WTC11 (cell line): ENCODE measurements at regions of chr19 and their contacts with region 1.

Region 1: GRCh38 chr19:41706741-41707501 is 1.5 kb upstream of the CEACAM5 start:
- DNase-seq: peak; percentile 88
- ATAC-seq: peak; percentile 96
- H3K4me3 Mint-ChIP-seq: peak overlapping the region; percentile 69
- H3K27ac Mint-ChIP-seq: no peak overlapping the region
- H3K4me1 Mint-ChIP-seq: 0 out of 2 replicates have a peak, but pooled peaks cover 2% of the 10 kb centered on the region
- H3K27me3 Mint-ChIP-seq: peaks cover 22% of the 10 kb centered on the region
- CTCF ChIP-seq: peak; percentile 96

Region 2: GRCh38 chr19:41439441-41440222 is 267.3 kb before region 1 on chr19 and contains the start of gene DMAC2:
- CTCF ChIA-PET with region 1: interaction called, 10 read pairs
- POLR2A ChIA-PET with region 1: no interaction called
- DNase-seq: peak; percentile 97
- ATAC-seq: peak; percentile 98
- H3K4me3 Mint-ChIP-seq: no peak within 1 kb of the TSS
- H3K27ac Mint-ChIP-seq: no peak within 1 kb of the TSS
- H3K4me1 Mint-ChIP-seq: peaks cover 13% of the 10 kb centered on the region
- H3K27me3 Mint-ChIP-seq: peaks cover 17% of the 10 kb centered on the region; the same call in 1 of the 2 replicates
- CTCF ChIP-seq: no peak
- total RNA-seq, gene DMAC2: 77.6 to 85.6 TPM (median 82.6 TPM) in 3 replicates

Region 3: DNA sequence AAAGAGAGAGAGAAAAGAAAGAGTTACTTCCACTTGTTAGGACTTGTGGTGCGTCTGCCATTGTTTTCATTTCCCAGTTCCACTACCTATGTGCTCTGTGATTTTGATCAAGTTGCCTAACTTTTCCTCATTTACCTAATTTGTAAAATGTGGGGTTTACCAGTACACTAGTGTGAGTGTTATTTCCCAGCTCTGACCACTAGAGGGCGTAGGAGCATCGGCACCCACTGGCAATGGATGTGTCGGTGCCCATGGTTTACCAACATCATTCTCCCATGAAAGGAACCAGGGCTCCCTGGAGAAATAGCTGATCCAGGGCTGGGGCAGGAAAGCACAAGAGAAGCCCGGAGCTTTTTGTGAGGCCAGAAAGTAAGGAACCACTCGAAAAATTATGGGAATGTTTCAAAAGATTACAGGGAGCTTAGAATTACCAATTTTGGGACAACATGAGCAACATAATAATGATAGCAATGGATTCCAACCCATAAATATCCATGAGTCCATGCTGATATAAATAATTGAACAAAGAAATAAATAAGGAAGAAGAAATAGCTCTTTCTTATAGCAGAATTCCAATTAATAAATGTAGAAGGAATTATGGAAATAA is 64.9 kb before region 1 on chr19:
- CTCF ChIA-PET with region 1: interaction called, 64 read pairs
- POLR2A ChIA-PET with region 1: no interaction called
- DNase-seq: peak; percentile 81
- ATAC-seq: peak; percentile 96
- H3K4me3 Mint-ChIP-seq: no peak overlapping the region
- H3K27ac Mint-ChIP-seq: no peak overlapping the region
- H3K4me1 Mint-ChIP-seq: no peaks in the 10 kb centered on the region
- H3K27me3 Mint-ChIP-seq: no peaks in the 10 kb centered on the region
- CTCF ChIP-seq: peak; percentile 92

Region 4: DNA sequence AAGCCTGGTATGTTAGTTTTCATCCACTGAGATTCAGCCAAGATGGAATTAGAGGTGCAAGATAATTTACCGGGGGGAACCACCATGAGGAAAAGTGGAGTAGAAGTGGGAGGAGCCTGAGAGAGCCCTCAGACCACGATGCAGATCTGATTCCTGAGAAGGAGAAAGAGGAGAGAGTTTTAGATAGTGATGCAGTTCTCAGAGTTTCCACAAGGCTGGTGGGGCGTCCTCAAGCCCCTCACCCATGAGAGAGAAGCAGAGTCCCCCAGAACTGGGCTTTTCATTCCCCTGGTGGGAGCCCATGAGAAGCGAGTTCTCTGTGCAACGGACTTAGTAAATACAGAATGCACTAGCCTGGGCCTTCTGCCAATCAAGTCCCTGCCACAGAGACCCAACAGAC is 19.6 kb after region 1 on chr19:
- CTCF ChIA-PET with region 1: interaction called, 73 read pairs
- POLR2A ChIA-PET with region 1: no interaction called
- DNase-seq: peak; percentile 33
- ATAC-seq: peak; percentile 99
- H3K4me3 Mint-ChIP-seq: no peak overlapping the region
- H3K27ac Mint-ChIP-seq: no peak overlapping the region
- H3K4me1 Mint-ChIP-seq: peaks cover 5% of the 10 kb centered on the region; the same call in 1 of the 2 replicates
- H3K27me3 Mint-ChIP-seq: peaks cover 4% of the 10 kb centered on the region; the same call in 1 of the 2 replicates
- CTCF ChIP-seq: no peak

Region 5: GRCh38 chr19:41746593-41747227 is 39.8 kb after region 1 on chr19:
- CTCF ChIA-PET with region 1: interaction called, 133 read pairs
- POLR2A ChIA-PET with region 1: no interaction called
- DNase-seq: peak; percentile 67
- ATAC-seq: peak; percentile 98
- H3K4me3 Mint-ChIP-seq: no peak overlapping the region
- H3K27ac Mint-ChIP-seq: no peak overlapping the region
- H3K4me1 Mint-ChIP-seq: no peaks in the 10 kb centered on the region
- H3K27me3 Mint-ChIP-seq: peaks cover 40% of the 10 kb centered on the region
- CTCF ChIP-seq: no peak

Region 6: DNA sequence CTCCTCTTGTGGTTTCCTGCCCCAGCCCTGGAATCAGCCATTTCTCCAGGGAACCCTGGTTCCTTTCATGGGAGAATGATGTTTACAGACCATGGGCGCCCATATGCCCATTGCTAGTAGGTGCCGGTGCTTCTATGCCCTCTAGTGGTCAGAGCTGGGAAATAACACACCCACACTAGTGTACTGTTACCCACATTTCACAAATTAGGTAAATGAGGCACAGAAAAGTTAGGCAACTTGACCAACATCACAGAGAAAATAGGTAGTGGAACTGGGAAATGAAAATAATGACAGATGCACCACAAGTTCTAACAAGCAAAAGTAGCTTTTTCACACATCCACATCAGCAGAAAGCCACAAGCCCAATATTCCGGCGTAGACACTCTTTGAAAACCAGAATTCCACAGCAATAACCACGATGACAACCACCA is 88.1 kb after region 1 on chr19:
- CTCF ChIA-PET with region 1: interaction called, 29 read pairs
- POLR2A ChIA-PET with region 1: no interaction called
- DNase-seq: peak; percentile 76
- ATAC-seq: peak; percentile 93
- H3K4me3 Mint-ChIP-seq: no peak overlapping the region
- H3K27ac Mint-ChIP-seq: no peak overlapping the region
- H3K4me1 Mint-ChIP-seq: peaks cover 4% of the 10 kb centered on the region
- H3K27me3 Mint-ChIP-seq: peaks cover 11% of the 10 kb centered on the region
- CTCF ChIP-seq: peak; percentile 86

Region 7: GRCh38 chr19:41837981-41838708 is 131.2 kb after region 1 on chr19:
- CTCF ChIA-PET with region 1: interaction called, 13 read pairs
- POLR2A ChIA-PET with region 1: no interaction called
- DNase-seq: no peak
- ATAC-seq: no peak
- H3K4me3 Mint-ChIP-seq: no peak overlapping the region
- H3K27ac Mint-ChIP-seq: no peak overlapping the region
- H3K4me1 Mint-ChIP-seq: no peaks in the 10 kb centered on the region
- H3K27me3 Mint-ChIP-seq: peaks cover 31% of the 10 kb centered on the region
- CTCF ChIP-seq: no peak

Region 8: DNA sequence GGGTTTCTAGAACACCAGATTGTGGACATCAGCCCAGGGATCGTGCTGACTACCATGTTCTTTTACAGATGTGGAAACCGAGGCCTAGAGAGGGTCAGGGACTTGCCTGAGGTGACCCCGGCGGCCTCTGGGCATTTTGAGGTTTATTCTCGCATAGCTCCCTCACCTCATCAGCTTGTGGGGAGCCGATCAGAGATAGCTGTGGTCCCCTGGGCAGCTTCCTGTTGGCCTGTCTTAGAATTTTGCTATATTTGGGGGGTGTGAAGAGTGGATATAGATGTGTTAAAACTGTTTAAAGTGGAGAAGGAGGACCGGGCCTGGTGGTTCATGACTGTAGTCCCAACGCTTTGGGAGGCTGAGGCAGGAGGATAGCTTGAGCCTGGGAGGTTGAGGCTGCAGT is 183.0 kb after region 1 on chr19:
- CTCF ChIA-PET with region 1: no interaction called
- POLR2A ChIA-PET with region 1: no interaction called
- DNase-seq: no peak
- ATAC-seq: no peak
- H3K4me3 Mint-ChIP-seq: no peak overlapping the region
- H3K27ac Mint-ChIP-seq: no peak overlapping the region
- H3K4me1 Mint-ChIP-seq: peaks cover 27% of the 10 kb centered on the region
- H3K27me3 Mint-ChIP-seq: no peaks in the 10 kb centered on the region; the same call in 1 of the 2 replicates
- CTCF ChIP-seq: no peak